ENCODE measurements at regions of chr19 and their contacts with region 1.

Region 1: DNA sequence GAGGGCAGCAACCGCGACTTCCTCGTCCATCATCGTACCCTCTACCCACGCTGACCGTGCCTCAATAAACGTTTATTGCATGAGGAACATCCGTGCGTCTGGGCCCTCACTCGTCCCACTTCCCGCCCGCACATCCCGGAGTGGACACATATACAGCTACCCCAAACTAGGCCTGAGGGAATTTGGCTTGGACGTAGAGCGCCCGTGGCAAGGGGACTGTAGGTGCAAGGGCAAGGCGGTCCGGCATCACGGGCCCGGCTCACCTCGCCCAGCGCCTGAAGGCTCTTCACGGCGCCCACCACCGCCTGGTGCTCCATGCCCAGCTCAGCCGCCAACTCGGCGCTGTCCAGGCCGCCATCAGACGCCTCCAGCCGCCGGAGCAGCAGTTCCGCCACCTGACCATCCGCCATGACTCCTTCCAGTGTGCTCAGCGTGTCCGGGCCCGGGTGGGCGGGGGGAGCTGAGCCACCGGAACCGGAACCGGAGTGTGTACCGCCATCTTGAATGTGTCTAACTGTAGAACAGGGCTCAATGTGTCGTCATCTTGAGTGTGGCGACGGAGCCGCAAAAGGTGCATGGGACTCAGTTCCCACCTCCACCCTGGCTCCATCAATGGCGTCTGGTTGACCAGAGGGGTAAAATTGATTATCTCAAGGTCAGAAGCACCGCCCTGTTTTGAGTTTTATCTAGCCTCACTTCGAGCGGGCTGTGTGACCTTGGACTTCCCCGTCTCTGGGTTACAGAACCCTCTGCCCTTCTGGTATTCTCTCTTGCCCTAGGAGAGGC is at the start of gene FARSA:
- DNase-seq: peak; percentile 94
- ATAC-seq: peak; percentile 82 to 84
- H3K4me3 ChIP-seq: peak within 1 kb of the TSS; percentile 85 to 100 (median 98)
- H3K27ac ChIP-seq: peak within 1 kb of the TSS; percentile 91 to 99 (median 94)
- H3K4me1 ChIP-seq: peaks cover 16 to 19% of the 10 kb centered on the region in 2 donors
- H3K27me3 ChIP-seq: no peaks in the 10 kb centered on the region
- CTCF ChIP-seq: no peak
- POLR2A ChIP-seq: peak; percentile 36 to 72
- total RNA-seq, gene FARSA: 40.7 to 68.8 (median 62.3) TPM

Region 2: DNA sequence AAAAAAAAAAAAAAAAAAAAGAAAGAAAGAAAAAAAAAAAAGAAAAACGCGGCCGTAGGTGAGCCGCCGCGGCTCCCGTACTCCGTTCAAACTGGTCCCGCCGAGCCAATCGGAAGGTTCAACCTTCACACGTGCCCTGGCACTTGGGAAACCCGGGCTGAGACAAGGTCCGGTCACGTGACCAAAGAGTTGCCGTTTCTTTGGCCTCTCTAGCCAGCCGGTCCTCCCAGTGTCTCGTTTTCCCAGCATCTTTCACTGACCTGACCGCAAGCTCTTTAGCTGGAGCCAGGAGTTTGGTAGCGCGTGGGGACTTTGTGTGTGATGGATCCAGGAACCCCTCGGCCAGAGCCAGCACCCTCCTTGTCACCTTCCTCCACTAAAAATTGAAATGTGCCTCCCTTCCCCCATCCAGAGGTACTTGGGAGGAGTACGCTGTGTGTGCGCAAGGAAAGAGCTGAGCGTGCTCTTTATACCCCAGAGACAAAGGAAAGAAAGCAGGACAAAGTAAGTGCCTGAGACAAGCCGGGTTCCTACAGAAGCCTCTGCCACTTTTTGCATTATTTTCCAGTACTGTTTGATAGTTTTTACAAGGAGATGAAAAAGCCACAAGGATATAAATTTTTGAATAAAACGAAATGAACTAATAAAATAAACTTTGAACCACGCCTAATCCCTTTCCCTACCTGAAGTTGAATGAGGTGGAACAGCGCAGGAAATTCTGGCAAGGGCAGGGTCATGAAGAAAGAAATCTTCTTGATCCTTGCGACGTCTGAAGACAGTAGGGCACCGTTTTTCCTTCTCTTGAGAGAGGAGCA is 210.7 kb before region 1 on chr19:
- in situ Hi-C with region 1: no loop called
- intact Hi-C with region 1: loop called (anchors 5 kb)
- DNase-seq: peak; percentile 98 to 99
- ATAC-seq: peak; percentile 96
- H3K4me3 ChIP-seq: peak overlapping the region; percentile 72 to 83 (median 76)
- H3K27ac ChIP-seq: peak overlapping the region; percentile 87 to 99 (median 94)
- H3K4me1 ChIP-seq: peaks cover 26 to 29% of the 10 kb centered on the region in 2 donors
- H3K27me3 ChIP-seq: no peaks in the 10 kb centered on the region
- CTCF ChIP-seq: peak in 1 of 5 experiments; percentile 42
- POLR2A ChIP-seq: peak; percentile 30 to 35

Region 3: DNA sequence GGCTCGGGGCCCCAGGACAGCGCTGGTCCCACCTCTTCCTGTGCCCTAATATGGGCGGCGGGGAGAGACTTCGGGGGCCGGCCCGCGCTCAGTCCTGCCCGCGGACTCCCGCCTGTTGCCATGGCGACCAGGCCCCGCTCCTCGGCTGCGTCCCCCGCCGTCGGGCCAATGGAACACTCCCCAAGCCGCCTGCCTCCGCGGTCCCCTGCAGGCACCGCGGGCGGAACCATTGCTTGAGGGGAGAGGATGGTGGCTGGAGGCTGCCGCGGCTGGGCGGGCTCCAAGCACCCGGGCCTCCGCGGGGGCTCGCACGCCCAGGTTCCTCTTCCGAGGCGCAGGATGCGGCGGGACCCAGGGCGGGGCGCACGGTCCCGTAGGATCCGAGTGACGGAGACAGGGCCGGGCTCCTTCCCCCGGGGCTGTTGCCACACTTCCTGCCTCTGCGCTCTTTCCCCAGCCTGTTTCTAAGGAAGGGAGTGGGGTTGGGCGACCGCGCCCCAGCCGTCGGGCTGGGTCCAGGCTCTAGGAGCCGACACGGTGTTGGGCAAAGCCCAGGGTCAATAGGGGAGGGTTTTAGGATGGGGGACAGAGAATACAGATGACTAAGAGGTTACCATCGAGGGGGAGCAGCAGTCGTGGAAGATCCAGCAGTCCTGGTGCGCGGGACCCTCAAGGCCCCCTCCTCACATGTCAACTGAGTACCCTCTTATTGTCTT is 143.4 kb before region 1 on chr19:
- in situ Hi-C with region 1: no loop called
- intact Hi-C with region 1: loop called (anchors 5 kb)
- DNase-seq: peak; percentile 89 to 90
- ATAC-seq: peak; percentile 32 to 34
- H3K4me3 ChIP-seq: peak overlapping the region; percentile 91 to 98 (median 94)
- H3K27ac ChIP-seq: peak overlapping the region; percentile 99 to 100 (median 100)
- H3K4me1 ChIP-seq: peaks cover 45 to 46% of the 10 kb centered on the region in 2 donors
- H3K27me3 ChIP-seq: no peaks in the 10 kb centered on the region
- CTCF ChIP-seq: no peak
- POLR2A ChIP-seq: peak; percentile 88 to 93

Region 4: GRCh38 chr19:12890787-12891552 is 42.5 kb before region 1 on chr19 and contains the start of gene GCDH:
- in situ Hi-C with region 1: no loop called
- intact Hi-C with region 1: loop called (anchors 1 kb)
- DNase-seq: peak; percentile 98 to 99
- ATAC-seq: peak; percentile 98 to 99
- H3K4me3 ChIP-seq: peak within 1 kb of the TSS; percentile 79 to 98 (median 84)
- H3K27ac ChIP-seq: peak within 1 kb of the TSS; percentile 83 to 96 (median 88)
- H3K4me1 ChIP-seq: peaks cover 10 to 18% of the 10 kb centered on the region in 2 donors
- H3K27me3 ChIP-seq: peaks cover 0 to 5% (median under 1%) of the 10 kb centered on the region in 3 donors
- CTCF ChIP-seq: peak in 1 of 5 experiments; percentile 34
- POLR2A ChIP-seq: peak; percentile 91 to 94
- total RNA-seq, gene GCDH: 35.6 to 83.8 (median 54.1) TPM

Region 5: GRCh38 chr19:12918271-12918670 is 15.2 kb before region 1 on chr19:
- in situ Hi-C with region 1: no loop called
- intact Hi-C with region 1: loop called (anchors 2 kb)
- DNase-seq: no peak
- ATAC-seq: no peak
- H3K4me3 ChIP-seq: no peak overlapping the region
- H3K27ac ChIP-seq: no peak overlapping the region
- H3K4me1 ChIP-seq: peaks cover 6 to 9% of the 10 kb centered on the region in 2 donors
- H3K27me3 ChIP-seq: no peaks in the 10 kb centered on the region
- CTCF ChIP-seq: no peak
- POLR2A ChIP-seq: no peak

Region 6: GRCh38 chr19:13012690-13013608 is 79.5 kb after region 1 on chr19:
- in situ Hi-C with region 1: no loop called
- intact Hi-C with region 1: no loop called
- DNase-seq: peak; percentile 91 to 93
- ATAC-seq: peak; percentile 55 to 74
- H3K4me3 ChIP-seq: peak overlapping the region; percentile 52 to 74 (median 59)
- H3K27ac ChIP-seq: peak overlapping the region; percentile 97 to 100 (median 99)
- H3K4me1 ChIP-seq: peaks cover 71 to 79% of the 10 kb centered on the region in 2 donors
- H3K27me3 ChIP-seq: no peaks in the 10 kb centered on the region
- CTCF ChIP-seq: no peak
- POLR2A ChIP-seq: peak; percentile 92 to 94